Lower leg skin (tissue), 4 donors: ENCODE measurements at regions of chr1 and their contacts with region 1.

Region 1: DNA sequence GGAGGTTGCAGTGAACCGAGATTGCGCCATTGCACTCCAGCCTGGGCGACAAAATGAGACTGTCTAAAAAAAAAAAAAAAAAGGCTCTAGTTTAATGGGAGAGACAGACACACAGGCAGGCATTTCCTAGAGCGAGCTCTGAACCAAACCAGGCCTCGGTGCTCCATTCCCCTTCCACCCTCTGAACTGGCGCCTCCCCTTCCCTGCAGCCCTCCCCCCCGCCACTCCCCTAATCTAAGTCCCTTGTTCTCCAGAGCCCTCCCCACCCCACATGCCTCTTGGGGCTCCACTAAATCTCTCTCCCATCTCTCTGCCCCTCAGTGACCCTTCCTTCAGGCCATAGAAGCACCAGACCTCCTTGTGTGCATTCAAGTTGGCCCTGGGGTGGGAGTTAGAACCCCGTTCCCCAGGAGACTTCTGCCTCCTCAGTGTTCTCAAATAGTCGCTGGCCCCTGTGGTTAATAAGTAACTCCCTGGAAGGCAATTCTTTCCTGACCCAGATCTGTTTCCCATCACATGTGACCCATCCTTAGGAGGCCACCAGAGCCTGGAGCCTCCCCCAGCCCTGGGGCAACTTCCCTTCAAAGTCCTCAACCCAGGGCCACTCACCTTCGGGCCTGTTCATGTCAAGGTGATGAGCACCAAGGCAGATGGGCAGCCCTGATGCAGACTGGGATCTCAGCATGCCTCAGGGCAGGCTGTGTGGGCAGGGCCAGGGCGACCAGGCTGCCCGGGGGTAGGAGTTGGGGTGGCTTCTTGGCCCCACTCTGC is 42.6 kb upstream of the EPB41 start:
- DNase-seq: no peak
- H3K4me3 ChIP-seq: no peak overlapping the region
- CTCF ChIP-seq: no peak
- POLR2A ChIP-seq: no peak

Region 2: GRCh38 chr1:28642847-28643635 is 228.8 kb before region 1 on chr1 and contains the start of gene TAF12:
- intact Hi-C with region 1: no loop called
- DNase-seq: peak; percentile 89 to 97
- H3K4me3 ChIP-seq: peak within 1 kb of the TSS; percentile 79
- CTCF ChIP-seq: no peak
- POLR2A ChIP-seq: peak in 1 of 2 donors; percentile 72
- total RNA-seq, gene TAF12: 19.3 to 28.8 (median 24.0) TPM

Region 3: GRCh38 chr1:28789412-28789811 is 82.4 kb before region 1 on chr1:
- intact Hi-C with region 1: loop called (anchors 5 kb)
- DNase-seq: no peak
- H3K4me3 ChIP-seq: no peak overlapping the region
- CTCF ChIP-seq: no peak
- POLR2A ChIP-seq: no peak